PC-3 (cell line): ENCODE measurements at regions of chr7 and their contacts with region 1.

Region 1: DNA sequence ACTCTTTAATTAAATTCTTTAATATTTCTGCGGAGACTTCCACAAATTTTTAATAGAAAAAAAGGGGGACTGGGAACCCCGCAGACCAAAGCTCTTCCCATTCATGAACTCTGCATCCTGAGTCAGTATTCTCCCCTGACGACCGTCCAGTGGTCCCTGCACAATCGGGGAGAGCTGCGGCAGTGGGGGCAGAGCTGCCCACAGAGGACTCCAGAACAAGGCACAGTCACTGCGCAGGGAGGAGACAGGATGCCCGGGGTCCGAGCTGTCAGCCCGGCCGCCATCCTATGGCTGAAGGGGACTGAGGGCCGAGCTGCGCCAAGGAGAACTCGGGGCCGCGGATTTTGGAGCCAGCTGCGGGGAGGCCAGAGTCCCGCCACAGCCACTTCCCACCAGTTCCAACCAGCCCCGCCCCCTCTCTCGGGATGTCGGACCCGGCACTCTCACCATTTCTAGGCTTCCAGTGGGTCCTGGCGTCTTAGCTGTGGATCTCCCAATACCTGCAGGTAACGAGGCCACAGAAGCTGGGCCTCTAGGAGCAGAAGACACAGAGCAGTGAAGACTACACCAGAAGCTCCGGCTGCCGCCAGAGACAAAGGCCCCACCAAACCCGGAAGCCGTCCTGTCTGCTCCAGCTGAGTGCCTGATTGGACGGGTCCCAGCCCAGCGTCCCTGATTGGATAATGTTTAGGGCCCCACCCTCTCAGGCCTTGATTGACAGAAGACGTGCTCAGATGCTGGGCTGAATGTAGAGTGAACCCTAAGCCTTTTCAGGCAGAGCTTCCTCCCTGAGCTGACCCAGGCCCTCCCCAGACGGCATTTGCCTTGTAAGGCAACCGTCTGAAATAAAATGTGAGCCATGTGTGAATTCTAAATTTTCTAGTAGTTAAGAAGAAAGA is at the start of gene ERV3-1:
- DNase-seq: peak; percentile 91
- ATAC-seq: peak; percentile 99
- H3K4me3 ChIP-seq: peak within 1 kb of the TSS; percentile 95
- H3K27ac ChIP-seq: peak within 1 kb of the TSS; percentile 41
- H3K4me1 ChIP-seq: no peaks in the 10 kb centered on the region
- H3K27me3 ChIP-seq: no peaks in the 10 kb centered on the region
- CTCF ChIP-seq: no peak
- total RNA-seq, gene ERV3-1: 4.7 and 8.6 TPM in 2 replicates

Region 2: DNA sequence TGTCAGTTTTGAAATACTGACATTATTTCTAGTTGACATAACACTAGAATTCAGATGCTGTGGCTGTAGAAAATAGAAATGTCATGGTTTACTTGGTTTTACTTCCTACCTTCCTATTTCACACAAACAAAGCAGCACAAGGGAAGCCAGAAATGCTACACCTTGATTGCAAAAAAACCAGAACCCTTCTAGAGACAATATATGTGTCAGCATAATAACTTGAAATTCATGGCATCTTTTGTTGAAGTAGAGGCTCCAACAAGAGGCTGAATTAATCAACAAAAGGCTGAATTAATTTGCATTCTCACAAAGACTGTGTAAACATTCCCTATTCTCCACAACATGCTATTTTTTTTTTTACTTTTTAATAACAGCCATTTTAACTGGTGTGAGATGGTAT is 40.7 kb before region 1 on chr7:
- CTCF ChIA-PET with region 1: no interaction called
- POLR2A ChIA-PET with region 1: no interaction called
- intact Hi-C with region 1: no loop called
- DNase-seq: no peak
- ATAC-seq: no peak
- H3K4me3 ChIP-seq: no peak overlapping the region
- H3K27ac ChIP-seq: no peak overlapping the region
- H3K4me1 ChIP-seq: no peaks in the 10 kb centered on the region
- H3K27me3 ChIP-seq: no peaks in the 10 kb centered on the region
- CTCF ChIP-seq: no peak

Region 3: GRCh38 chr7:65037740-65038678 is 31.7 kb after region 1 on chr7:
- CTCF ChIA-PET with region 1: no interaction called
- POLR2A ChIA-PET with region 1: interaction called, 5 read pairs
- intact Hi-C with region 1: loop called (anchors 2 kb)
- DNase-seq: peak; percentile 90
- ATAC-seq: peak; percentile 83
- H3K4me3 ChIP-seq: peak overlapping the region; percentile 73
- H3K27ac ChIP-seq: peak overlapping the region; percentile 26; the same call in 1 of the 2 replicates
- H3K4me1 ChIP-seq: 0 out of 2 replicates have a peak, but pooled peaks cover 9% of the 10 kb centered on the region
- H3K27me3 ChIP-seq: no peaks in the 10 kb centered on the region
- CTCF ChIP-seq: no peak

Region 4: GRCh38 chr7:66054063-66054462 is 1047.7 kb after region 1 on chr7:
- CTCF ChIA-PET with region 1: no interaction called
- POLR2A ChIA-PET with region 1: interaction called, 10 read pairs
- intact Hi-C with region 1: no loop called
- DNase-seq: no peak
- ATAC-seq: no peak
- H3K4me3 ChIP-seq: no peak overlapping the region
- H3K27ac ChIP-seq: no peak overlapping the region
- H3K4me1 ChIP-seq: peaks cover 7% of the 10 kb centered on the region
- H3K27me3 ChIP-seq: no peaks in the 10 kb centered on the region
- CTCF ChIP-seq: no peak